GM13976 (cell line): ENCODE measurements at regions of chr2 and their contacts with region 1.

Region 1: GRCh38 chr2:109128048-109128465 is 948 bp upstream of the SH3RF3 start:
- DNase-seq: peak; percentile 82
- CTCF ChIP-seq: peak; percentile 71

Region 2: GRCh38 chr2:108477099-108477498 is 651.0 kb before region 1 on chr2:
- in situ Hi-C with region 1: no loop called
- DNase-seq: no peak
- CTCF ChIP-seq: no peak

Region 3: GRCh38 chr2:109335631-109336176 is 207.6 kb after region 1 on chr2:
- in situ Hi-C with region 1: no loop called
- DNase-seq: no peak
- CTCF ChIP-seq: no peak

Region 4: DNA sequence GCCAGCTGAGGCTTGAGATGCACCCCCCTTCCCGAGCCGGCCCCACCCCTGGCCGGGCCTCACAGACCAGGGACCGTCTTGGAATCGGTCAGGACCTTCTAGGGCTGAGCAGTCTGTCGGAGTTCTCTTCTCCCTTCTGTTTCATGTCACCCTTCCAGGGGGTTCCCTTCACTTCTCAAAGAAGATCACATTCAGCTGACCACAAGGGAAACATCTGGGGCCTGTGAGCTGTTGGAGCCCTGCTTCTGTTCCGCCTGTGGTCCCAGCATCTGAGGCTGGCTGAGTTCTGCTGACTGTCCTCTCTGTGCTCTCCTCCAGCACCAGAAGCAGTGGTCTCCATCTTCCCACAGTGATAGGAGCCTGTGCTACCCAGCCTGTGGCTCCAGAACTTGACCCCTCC is 379.2 kb after region 1 on chr2:
- in situ Hi-C with region 1: loop called (anchors 10 kb)
- DNase-seq: no peak
- CTCF ChIP-seq: no peak